ENCODE measurements at regions of chr11 and their contacts with region 1.

Region 1: DNA sequence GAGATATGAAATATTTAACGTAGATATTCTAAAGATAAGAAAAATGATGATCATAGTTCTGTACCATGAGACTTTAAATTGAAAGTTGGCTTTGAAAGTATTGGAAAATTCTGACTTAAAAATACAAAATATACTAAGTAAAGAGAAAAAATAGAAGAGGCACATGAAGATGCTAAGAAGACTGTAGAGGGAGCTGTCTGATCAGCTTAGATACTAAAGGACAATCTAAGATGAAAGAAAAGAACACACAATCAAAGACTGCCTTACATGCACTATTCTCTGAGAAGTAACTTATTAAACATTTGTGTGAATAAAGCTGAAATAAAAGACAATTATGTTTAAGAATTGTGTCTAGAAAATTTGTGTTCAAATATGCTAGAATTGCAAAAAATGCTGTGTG is 55.1 kb downstream of the RBMXL2 start:
- DNase-seq: peak in 1 of 2 experiments; percentile 50
- H3K4me3 ChIP-seq: no peak overlapping the region
- H3K4me1 ChIP-seq: peaks cover 11% of the 10 kb centered on the region
- H3K27me3 ChIP-seq: no peaks in the 10 kb centered on the region

Region 2: GRCh38 chr11:7307836-7308235 is 163.9 kb after region 1 on chr11:
- in situ Hi-C with region 1: no loop called
- DNase-seq: no peak
- H3K4me3 ChIP-seq: no peak overlapping the region
- H3K4me1 ChIP-seq: no peaks in the 10 kb centered on the region
- H3K27me3 ChIP-seq: peaks cover 17% of the 10 kb centered on the region

Region 3: DNA sequence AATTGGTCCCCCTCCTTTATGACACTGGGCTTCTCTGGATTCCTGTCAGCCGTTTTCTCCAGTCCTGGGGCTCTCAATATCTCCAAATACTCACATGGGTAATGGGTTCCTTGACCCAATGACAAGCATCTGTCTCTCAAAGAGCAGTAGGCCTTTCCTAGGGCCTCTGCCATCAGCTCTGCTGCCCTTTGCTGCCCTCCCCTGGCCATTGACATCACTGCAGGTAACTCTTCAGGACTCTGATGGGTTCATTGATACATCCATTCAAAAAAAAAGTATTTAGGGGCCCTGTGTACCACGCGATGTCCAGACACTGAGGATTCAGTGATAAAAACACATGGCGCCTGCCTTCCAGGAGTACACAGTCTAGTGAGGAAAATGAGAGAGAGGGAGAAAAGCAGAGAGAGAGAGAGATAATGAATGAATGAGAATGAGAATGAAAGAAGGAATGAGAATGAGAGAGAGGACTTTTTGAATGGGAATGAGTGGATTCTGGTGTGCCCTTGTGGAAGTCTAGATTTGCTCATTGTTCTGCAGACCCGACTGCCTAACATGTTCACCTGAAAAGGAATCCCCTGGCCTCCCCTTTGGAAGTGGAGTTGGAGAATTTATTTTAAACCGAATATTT is 298.8 kb after region 1 on chr11:
- in situ Hi-C with region 1: loop called (anchors 25 kb)
- DNase-seq: peak; percentile 62 to 89
- H3K4me3 ChIP-seq: no peak overlapping the region
- H3K4me1 ChIP-seq: no peaks in the 10 kb centered on the region
- H3K27me3 ChIP-seq: no peaks in the 10 kb centered on the region

Region 4: GRCh38 chr11:7490054-7490453 is 346.1 kb after region 1 on chr11:
- in situ Hi-C with region 1: no loop called
- DNase-seq: no peak
- H3K4me3 ChIP-seq: no peak overlapping the region
- H3K4me1 ChIP-seq: peaks cover 38% of the 10 kb centered on the region
- H3K27me3 ChIP-seq: no peaks in the 10 kb centered on the region

Measured in HAP-1 (cell line).